Common myeloid progenitor, CD34-positive (primary cell): ENCODE measurements at regions of chr5 and their contacts with region 1.

Region 1: GRCh38 chr5:7815892-7816534 is 34.9 kb downstream of the CFAP90 start:
- DNase-seq: peak; percentile 58 to 78 (median 71)
- H3K4me3 ChIP-seq: peak overlapping the region in 3 of 7 experiments; percentile 21 to 50 (median 33)
- H3K27ac ChIP-seq: no peak overlapping the region
- H3K4me1 ChIP-seq: peaks cover 0 to 12% (median 11%) of the 10 kb centered on the region in 4 experiments
- H3K27me3 ChIP-seq: peaks cover 0 to 2% (median 0%) of the 10 kb centered on the region in 5 experiments

Region 2: DNA sequence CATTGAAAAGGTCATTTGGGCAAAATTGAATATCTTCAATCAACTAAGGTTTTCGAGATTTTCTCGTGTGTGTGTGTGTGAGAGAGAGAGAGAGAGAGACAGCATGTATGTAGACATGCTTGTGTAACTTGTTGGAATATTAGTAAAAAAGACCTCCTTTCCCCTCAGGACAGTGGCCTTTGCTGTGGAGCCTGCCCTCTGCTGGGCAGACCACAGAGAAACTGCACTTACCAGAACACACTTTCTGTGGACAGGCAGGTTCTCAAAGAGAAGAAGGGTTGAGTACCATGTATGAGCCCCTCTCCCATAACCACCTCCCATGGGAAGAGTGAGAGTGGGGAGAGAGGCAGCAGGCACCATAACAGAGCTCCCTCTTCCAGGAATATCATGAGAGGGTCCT is 10.6 kb before region 1 on chr5:
- CTCF ChIA-PET with region 1: interaction called, 12 read pairs
- POLR2A ChIA-PET with region 1: no interaction called
- DNase-seq: peak; percentile 8 to 37 (median 32)
- H3K4me3 ChIP-seq: no peak overlapping the region
- H3K27ac ChIP-seq: no peak overlapping the region
- H3K4me1 ChIP-seq: no peaks in the 10 kb centered on the region
- H3K27me3 ChIP-seq: peaks cover 0 to 13% (median 7%) of the 10 kb centered on the region in 5 experiments